Activated CD4-positive, alpha-beta memory T cell treated with anti-CD3 and anti-CD28 coated beads for 36 hours (primary cell): ENCODE measurements at regions of chr11 and their contacts with region 1.

Region 1: DNA sequence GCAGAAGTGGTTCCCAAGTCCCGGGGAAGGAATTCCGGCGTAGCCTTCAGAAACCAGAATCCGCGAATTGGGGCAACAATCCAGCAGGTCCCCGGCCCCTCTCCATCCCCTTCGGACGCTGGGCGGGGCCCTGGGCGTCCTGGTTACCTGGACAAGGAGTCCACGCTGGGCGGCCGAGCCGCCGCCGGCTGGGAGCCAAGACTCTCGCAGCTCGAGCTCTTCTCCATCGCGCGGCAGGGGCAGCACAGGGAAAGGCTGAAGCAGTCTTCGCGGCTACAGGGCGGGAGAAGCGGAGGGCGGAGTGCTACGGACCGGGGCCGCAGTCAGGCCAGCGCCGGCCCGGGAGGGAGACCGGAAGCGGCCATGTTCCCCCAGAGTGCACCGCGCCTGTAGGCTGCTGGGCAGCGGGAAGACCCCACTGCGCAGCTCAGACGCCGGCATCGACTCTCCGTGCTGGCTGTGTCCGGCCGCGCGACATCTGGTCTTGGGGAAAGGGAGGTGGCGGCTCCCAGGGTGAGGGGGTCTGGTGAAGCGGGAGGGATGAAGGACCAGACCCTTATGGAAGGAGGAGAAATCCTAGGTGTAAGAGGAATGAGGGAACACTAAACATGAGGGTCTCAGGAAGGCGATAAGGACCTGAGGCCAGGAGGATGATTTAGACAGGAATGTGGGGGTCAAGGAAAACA is at the start of gene MTMR2:
- DNase-seq: peak; percentile 72
- H3K4me3 Mint-ChIP-seq: peak within 1 kb of the TSS; percentile 100
- H3K27ac Mint-ChIP-seq: peak within 1 kb of the TSS; percentile 99
- H3K4me1 Mint-ChIP-seq: peaks cover 30% of the 10 kb centered on the region
- H3K27me3 Mint-ChIP-seq: no peaks in the 10 kb centered on the region
- total RNA-seq, gene MTMR2: 36.9 to 37.8 TPM

Region 2: DNA sequence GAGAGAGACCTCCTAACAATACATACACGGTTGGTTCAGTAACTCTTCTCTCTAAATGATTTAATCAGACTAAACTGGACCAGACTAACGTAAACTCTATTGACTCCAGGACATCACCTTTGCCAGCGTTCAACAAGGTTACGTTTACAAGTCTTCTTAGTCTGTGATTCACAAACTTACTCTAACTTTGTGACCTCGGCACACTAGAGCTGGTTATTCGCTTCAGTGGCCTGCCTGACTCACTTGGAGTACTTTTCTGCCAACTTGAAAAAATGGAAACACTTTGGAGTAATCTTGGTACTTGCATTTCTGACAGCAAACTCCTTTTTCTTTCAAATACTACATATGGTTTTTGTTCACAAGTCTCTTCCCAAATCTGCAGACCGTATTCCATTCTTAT is 26.1 kb before region 1 on chr11:
- CTCF ChIA-PET with region 1: no interaction called
- POLR2A ChIA-PET with region 1: no interaction called
- intact Hi-C with region 1: no loop called
- DNase-seq: no peak
- H3K4me3 Mint-ChIP-seq: no peak overlapping the region
- H3K27ac Mint-ChIP-seq: no peak overlapping the region
- H3K4me1 Mint-ChIP-seq: no peaks in the 10 kb centered on the region
- H3K27me3 Mint-ChIP-seq: no peaks in the 10 kb centered on the region

Region 3: GRCh38 chr11:96149743-96150555 is 226.1 kb after region 1 on chr11:
- CTCF ChIA-PET with region 1: no interaction called
- POLR2A ChIA-PET with region 1: no interaction called
- intact Hi-C with region 1: loop called (anchors 5 kb)
- DNase-seq: no peak
- H3K4me3 Mint-ChIP-seq: no peak overlapping the region
- H3K27ac Mint-ChIP-seq: no peak overlapping the region
- H3K4me1 Mint-ChIP-seq: peaks cover 41% of the 10 kb centered on the region
- H3K27me3 Mint-ChIP-seq: no peaks in the 10 kb centered on the region

Region 4: DNA sequence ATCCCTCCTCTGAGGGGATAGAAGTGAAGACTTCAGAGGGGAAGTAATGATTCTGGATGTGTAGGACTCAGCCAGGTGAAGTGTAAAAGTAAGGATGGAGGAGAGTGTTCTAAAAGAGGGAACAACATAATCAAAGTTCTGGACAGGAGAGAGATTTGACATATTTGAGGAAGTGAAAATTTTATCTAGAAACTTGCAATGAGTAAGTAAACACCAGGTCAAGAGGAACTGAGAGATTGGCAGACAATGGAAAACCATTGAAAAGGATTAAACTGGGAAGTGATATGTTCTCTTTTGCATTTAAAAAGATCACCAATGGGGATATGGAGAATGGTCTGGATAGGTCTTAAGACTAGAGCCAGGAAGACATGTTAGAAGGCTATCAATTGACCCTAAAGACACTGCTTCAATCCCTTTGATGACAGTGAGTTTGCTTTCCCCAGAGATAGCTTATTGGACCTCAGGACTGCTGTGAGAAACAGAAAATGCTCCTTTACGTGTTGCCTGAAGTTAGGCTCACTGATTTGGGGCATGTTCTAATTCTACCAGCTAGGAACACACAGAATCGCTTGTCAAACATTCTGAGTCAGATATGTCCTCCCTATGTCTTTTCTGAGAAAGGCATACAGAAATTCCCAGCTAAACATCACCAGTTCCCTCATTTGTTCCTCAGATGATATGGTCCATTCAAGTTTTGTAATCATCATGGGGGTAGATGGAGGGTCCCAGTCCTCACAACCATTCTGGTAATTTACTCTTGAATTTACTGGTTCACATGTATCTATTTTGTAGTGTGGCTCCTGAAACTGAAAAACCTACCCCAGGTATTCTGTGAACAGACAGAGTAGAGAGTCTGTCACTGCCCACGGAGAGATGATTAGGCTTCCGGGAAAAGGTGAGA is 274.2 kb after region 1 on chr11:
- CTCF ChIA-PET with region 1: no interaction called
- POLR2A ChIA-PET with region 1: no interaction called
- intact Hi-C with region 1: loop called (anchors 10 kb)
- DNase-seq: peak; percentile 50
- H3K4me3 Mint-ChIP-seq: peak overlapping the region; percentile 28
- H3K27ac Mint-ChIP-seq: peak overlapping the region; percentile 94
- H3K4me1 Mint-ChIP-seq: peaks cover 86% of the 10 kb centered on the region
- H3K27me3 Mint-ChIP-seq: no peaks in the 10 kb centered on the region

Region 5: DNA sequence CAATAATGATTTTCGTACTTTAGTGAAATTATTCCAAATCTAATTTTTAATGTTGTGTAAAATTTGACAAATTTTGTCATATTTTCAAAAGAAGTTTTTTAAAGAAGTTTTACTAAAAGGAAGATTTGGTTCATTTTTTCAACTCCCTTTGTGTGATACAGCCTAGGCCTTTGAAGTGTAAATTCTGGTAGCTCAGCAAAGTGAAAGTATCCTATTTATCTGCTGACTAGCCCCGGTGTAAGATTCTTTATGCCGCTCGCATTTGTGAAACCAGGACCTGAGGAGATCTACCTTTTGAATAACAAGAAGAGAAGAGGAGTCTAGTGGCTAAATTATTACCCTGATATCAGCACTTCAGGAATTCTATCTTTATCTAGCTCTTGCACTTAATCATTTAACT is 643.3 kb after region 1 on chr11:
- CTCF ChIA-PET with region 1: no interaction called
- POLR2A ChIA-PET with region 1: no interaction called
- intact Hi-C with region 1: loop called (anchors 10 kb)
- DNase-seq: no peak
- H3K4me3 Mint-ChIP-seq: no peak overlapping the region
- H3K27ac Mint-ChIP-seq: no peak overlapping the region
- H3K4me1 Mint-ChIP-seq: no peaks in the 10 kb centered on the region
- H3K27me3 Mint-ChIP-seq: no peaks in the 10 kb centered on the region